ENCODE measurements at regions of chr15 and their contacts with region 1.

Region 1: GRCh38 chr15:78241007-78241406 is 6.6 kb upstream of the ACSBG1 start:
- DNase-seq: peak; percentile 66 to 97
- H3K4me3 ChIP-seq: no peak overlapping the region
- H3K27ac ChIP-seq: no peak overlapping the region
- H3K4me1 ChIP-seq: peaks cover 0 to 8% (median 5%) of the 10 kb centered on the region in 4 experiments; a peak in 6 of 7 replicates
- H3K27me3 ChIP-seq: no peaks in the 10 kb centered on the region
- CTCF ChIP-seq: peak; percentile 81 to 93 (median 86)
- EP300 ChIP-seq: no peak
- POLR2A ChIP-seq: no peak
- RAD21 ChIP-seq: peak; percentile 87 to 90

Region 2: DNA sequence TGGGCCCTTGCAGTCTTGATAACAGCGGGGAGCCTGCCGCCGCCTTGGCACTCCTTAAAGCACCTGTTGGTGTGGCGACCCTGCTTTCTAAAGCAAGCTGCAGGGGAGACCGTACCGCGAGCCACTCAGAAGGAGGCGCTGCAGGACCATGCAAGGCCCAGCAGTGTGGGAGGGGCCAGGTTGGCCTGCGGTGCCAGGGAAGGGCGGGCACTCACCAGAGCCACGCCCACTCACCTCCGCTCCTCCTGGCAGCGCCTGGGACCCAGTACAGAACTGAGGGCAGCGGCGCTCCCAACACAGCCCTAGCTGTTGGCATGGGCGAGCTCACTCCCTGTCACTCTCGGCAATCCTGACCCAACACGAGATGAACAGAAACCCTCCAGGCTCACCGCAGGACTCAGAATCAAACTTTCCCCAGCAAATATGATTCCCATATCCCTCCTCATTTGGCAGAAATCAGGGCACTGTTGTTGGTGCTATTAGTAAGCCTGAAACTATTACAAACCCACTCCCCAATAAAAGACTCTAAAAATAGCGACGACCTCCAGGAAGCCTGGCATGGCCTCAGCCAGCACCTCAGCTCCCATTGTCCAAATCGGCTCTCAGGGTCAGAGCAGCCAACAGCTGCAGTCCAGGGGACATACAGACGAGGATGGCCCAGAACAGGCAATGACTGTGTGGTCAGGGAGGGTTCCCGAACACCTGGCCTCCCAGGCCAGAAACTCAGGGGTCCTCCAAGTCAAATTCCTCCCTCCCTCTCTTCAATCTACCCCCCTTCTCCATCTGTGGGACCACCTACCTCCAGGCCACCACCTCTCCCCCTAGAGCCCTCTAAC is 240.7 kb before region 1 on chr15:
- CTCF ChIA-PET with region 1: interaction called, 19 read pairs
- POLR2A ChIA-PET with region 1: no interaction called
- DNase-seq: peak; percentile 85 to 96
- H3K4me3 ChIP-seq: no peak overlapping the region
- H3K27ac ChIP-seq: no peak overlapping the region
- H3K4me1 ChIP-seq: peaks cover 0 to 4% (median 0%) of the 10 kb centered on the region in 4 experiments; a peak in 2 of 7 replicates
- H3K27me3 ChIP-seq: no peaks in the 10 kb centered on the region
- CTCF ChIP-seq: peak; percentile 89 to 98 (median 93)
- EP300 ChIP-seq: peak in 1 of 2 experiments; percentile 46; a peak in 1 of 3 replicates
- POLR2A ChIP-seq: no peak
- RAD21 ChIP-seq: peak; percentile 97 to 98

Region 3: DNA sequence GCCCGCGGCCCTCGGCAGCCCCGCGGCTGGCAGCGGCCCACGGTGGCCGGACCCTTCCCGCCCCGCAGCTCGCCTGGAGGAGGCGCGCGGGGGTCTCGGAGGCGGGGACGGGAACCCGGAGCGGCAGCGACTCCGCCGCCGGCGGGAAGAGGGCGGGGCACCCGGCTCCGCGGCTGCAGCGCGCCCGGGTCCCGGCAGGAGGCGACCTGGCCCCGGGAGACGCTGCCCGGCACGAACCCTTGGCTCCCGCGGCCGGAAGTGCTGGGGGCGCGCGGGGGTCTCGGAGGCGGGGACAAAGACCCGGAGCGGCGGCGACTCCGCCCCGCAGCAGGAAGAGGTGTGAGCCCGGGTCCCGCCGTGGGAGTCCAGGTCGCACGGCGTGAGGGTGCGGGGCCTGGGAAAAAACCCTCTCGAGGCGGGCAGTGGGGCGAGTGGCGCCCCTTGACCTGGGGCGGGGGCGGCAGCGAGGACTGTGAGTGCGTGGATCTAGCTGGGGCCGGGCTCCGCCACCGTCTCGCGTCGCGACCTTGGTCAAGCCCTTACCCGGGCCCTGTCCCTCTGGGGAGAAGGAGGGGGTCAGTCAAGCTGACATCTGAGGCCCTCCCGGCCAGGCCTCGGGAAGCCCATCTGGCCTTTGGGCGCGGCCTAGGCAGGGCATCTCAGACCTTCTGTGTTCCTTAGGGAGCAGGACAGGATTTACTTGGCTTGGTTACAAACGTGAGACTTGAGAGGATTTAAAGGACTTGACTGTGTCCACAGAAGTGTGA is 109.5 kb before region 1 on chr15 and contains the start of gene CIB2:
- CTCF ChIA-PET with region 1: interaction called, 64 read pairs
- POLR2A ChIA-PET with region 1: no interaction called
- DNase-seq: peak in 1 of 2 experiments; percentile 91
- H3K4me3 ChIP-seq: peak within 1 kb of the TSS; percentile 66 to 81 (median 80)
- H3K27ac ChIP-seq: no peak within 1 kb of the TSS
- H3K4me1 ChIP-seq: peaks cover 0 to 21% (median 14%) of the 10 kb centered on the region in 4 experiments; a peak in 6 of 7 replicates
- H3K27me3 ChIP-seq: no peaks in the 10 kb centered on the region; a peak in 1 of 7 replicates
- CTCF ChIP-seq: peak; percentile 48 to 82 (median 57)
- EP300 ChIP-seq: 0 out of 3 replicates have a peak, but pooled peaks of 1 of the 2 experiments have one; percentile 26
- POLR2A ChIP-seq: no peak; a peak in 1 of 3 replicates
- RAD21 ChIP-seq: peak; percentile 55 to 69
- total RNA-seq, gene CIB2: 45.8 and 46.8 TPM in 2 replicates

Region 4: GRCh38 chr15:78177447-78177873 is 63.5 kb before region 1 on chr15:
- CTCF ChIA-PET with region 1: interaction called, 285 read pairs
- POLR2A ChIA-PET with region 1: no interaction called
- DNase-seq: peak; percentile 36 to 88
- H3K4me3 ChIP-seq: no peak overlapping the region
- H3K27ac ChIP-seq: no peak overlapping the region
- H3K4me1 ChIP-seq: no peaks in the 10 kb centered on the region
- H3K27me3 ChIP-seq: no peaks in the 10 kb centered on the region
- CTCF ChIP-seq: peak; percentile 91 to 96 (median 91)
- EP300 ChIP-seq: no peak
- POLR2A ChIP-seq: no peak
- RAD21 ChIP-seq: peak; percentile 94 to 96

Region 5: GRCh38 chr15:78195735-78196201 is 45.2 kb before region 1 on chr15:
- CTCF ChIA-PET with region 1: interaction called, 96 read pairs
- POLR2A ChIA-PET with region 1: no interaction called
- DNase-seq: peak in 1 of 2 experiments; percentile 61
- H3K4me3 ChIP-seq: no peak overlapping the region
- H3K27ac ChIP-seq: no peak overlapping the region
- H3K4me1 ChIP-seq: no peaks in the 10 kb centered on the region
- H3K27me3 ChIP-seq: no peaks in the 10 kb centered on the region
- CTCF ChIP-seq: peak; percentile 87 to 93 (median 90)
- EP300 ChIP-seq: no peak
- POLR2A ChIP-seq: no peak
- RAD21 ChIP-seq: peak; percentile 86 to 87

Region 6: DNA sequence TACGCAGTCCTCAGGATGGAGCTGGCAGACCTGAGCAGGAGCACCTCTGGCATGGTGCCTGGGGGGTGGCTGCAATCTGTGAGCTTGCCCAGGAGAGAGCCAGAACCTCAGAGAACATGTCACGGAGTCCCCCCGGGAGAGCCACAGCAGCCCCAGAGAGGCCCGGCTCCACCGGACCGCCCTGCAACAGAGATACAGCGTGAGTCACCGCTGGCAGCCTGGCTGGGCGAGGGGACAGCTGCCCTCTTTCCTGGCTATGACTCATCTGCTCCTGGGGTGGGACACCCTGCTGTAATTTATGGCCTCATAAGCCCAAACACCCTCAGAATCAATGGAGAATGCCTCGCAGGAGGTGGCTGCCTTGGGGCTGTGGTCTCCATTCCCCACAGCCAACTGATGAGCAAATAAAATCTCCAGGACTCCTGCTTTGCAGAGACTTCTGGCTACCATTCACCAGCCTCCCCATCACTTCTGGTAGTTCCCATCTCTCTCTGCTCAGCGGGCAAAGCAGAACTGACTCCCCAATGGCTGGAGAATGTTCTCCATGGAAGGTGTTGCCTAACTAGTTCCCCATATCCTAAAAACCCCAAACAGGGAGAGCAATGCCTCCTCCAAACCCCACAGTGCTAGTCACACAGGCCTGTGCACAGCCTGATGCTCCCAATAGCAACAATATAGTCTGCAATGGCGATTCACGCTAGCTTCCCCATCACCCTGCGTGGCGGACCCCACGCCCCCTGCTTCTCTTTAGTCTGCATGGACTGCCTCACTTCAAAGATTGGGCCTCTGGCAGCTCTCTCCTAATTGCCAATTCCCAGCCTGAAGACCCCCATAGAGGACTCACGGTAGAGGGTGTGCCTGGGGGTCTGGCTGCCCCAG is 28.2 kb before region 1 on chr15:
- CTCF ChIA-PET with region 1: interaction called, 34 read pairs
- POLR2A ChIA-PET with region 1: no interaction called
- DNase-seq: peak in 1 of 2 experiments; percentile 35
- H3K4me3 ChIP-seq: no peak overlapping the region
- H3K27ac ChIP-seq: no peak overlapping the region
- H3K4me1 ChIP-seq: peaks cover 0 to 2% (median 0%) of the 10 kb centered on the region in 4 experiments; a peak in 2 of 7 replicates
- H3K27me3 ChIP-seq: no peaks in the 10 kb centered on the region
- CTCF ChIP-seq: no peak
- EP300 ChIP-seq: no peak
- POLR2A ChIP-seq: no peak
- RAD21 ChIP-seq: no peak

Region 7: DNA sequence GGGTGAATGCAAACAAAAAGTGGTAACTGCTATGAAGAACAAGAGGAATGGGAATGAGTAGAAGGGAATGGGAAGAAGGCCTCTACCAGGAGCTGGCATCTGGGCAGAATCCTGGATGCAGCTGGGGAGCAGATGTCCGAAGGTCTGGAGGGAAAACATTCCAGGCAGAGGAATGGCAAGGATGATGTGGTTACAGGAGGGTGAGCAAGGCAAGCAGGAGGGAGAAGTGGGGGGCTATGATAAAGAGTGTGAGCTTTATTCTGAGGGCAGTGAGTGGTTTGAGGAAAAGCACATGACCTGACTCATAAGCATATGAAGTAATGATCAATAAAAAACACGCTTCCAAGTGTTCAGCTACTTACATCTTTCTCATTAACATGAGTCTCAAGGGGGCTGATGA is 41.3 kb after region 1 on chr15:
- CTCF ChIA-PET with region 1: interaction called, 12 read pairs
- POLR2A ChIA-PET with region 1: no interaction called
- DNase-seq: no peak
- H3K4me3 ChIP-seq: no peak overlapping the region
- H3K27ac ChIP-seq: no peak overlapping the region
- H3K4me1 ChIP-seq: no peaks in the 10 kb centered on the region
- H3K27me3 ChIP-seq: no peaks in the 10 kb centered on the region
- CTCF ChIP-seq: no peak
- EP300 ChIP-seq: no peak
- POLR2A ChIP-seq: no peak
- RAD21 ChIP-seq: no peak